Calu3 (cell line): ENCODE measurements at regions of chr1 and their contacts with region 1.

Region 1: DNA sequence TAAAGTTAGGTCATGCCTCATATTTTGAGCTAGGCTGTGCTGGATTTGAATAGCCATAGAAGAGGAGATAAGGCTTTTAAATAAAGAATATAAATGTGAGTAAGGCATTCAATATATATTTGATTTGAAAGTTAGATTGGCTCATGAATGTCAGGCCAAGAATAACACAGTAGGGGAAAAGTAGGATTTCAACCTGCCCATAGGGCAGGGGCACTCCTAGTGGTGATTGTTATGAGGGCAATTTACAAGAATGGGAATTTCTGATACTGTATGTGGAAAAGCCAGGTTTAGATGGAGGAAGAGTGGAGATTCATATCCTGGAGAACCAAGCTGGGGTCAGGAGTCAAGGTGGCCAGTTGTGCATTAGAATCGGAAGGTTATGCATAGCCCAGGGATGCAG is 74.9 kb downstream of the DNAH14 start:
- DNase-seq: peak; percentile 13
- H3K4me3 Mint-ChIP-seq: no peak overlapping the region
- H3K27ac Mint-ChIP-seq: no peak overlapping the region
- H3K4me1 Mint-ChIP-seq: peaks cover 15% of the 10 kb centered on the region
- H3K27me3 Mint-ChIP-seq: no peaks in the 10 kb centered on the region
- CTCF ChIP-seq: peak; percentile 56

Region 2: GRCh38 chr1:224650290-224650689 is 354.1 kb before region 1 on chr1:
- CTCF ChIA-PET with region 1: interaction called, 4 read pairs
- intact Hi-C with region 1: loop called (anchors 10 kb)
- DNase-seq: no peak
- H3K4me3 Mint-ChIP-seq: no peak overlapping the region
- H3K27ac Mint-ChIP-seq: no peak overlapping the region
- H3K4me1 Mint-ChIP-seq: peaks cover 22% of the 10 kb centered on the region
- H3K27me3 Mint-ChIP-seq: no peaks in the 10 kb centered on the region
- CTCF ChIP-seq: no peak

Region 3: DNA sequence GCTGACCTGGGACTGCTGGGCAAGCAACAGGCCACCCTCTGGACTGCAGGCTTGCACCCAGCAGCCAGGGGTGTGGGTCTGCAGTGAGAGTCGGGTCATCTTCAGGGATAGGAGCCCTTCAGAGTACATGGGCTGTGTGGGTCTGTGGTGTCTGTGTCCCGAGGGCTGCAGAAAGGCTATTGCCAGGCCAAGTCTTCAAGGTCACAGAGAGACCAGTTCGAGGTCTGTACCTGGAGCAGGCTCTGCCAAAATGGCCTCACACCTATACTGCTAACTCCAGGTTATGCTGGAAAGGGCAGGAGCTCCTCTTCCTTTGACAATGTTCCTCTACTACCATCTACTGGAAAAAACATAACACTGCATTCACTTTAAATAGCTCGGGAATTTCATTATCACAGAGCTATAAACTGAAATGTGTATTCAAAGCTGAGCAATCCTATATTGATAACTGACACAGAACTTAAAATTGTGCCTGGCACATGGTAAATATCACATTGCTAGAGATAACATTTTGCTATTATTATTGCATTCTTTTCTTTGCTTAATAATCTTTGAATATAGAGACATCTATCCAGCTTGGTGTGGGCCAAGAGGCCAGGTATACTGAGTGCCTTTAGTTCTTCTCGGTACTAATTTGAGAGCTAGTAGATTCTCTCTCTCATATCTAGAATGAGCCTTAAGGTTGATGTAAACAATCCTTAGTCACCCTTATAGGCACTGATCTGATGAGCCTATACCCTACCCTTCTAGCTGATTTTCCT is 81.8 kb before region 1 on chr1:
- CTCF ChIA-PET with region 1: no interaction called
- intact Hi-C with region 1: no loop called
- DNase-seq: peak; percentile 30
- H3K4me3 Mint-ChIP-seq: no peak overlapping the region
- H3K27ac Mint-ChIP-seq: no peak overlapping the region
- H3K4me1 Mint-ChIP-seq: peaks cover 11% of the 10 kb centered on the region
- H3K27me3 Mint-ChIP-seq: no peaks in the 10 kb centered on the region
- CTCF ChIP-seq: peak; percentile 15

Region 4: DNA sequence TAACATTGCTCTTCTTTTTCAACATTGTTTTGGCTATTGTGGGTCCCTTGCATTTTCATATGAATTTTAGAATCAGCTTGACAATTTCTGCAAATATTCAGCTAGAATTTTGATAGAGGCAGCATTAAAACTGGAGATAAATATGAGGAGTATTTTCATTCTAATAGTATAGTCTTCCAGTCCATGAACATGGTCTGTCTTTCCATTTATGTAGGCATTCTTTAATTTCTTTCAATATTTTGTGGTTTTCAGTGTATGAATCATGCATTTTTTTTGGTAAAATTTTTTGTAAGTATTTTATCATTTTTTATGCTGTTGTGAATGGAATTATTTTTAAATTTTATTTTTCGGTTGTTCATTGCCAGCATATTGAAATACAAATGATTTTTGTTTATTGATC is 22.3 kb after region 1 on chr1:
- CTCF ChIA-PET with region 1: interaction called, 12 read pairs
- intact Hi-C with region 1: no loop called
- DNase-seq: no peak
- H3K4me3 Mint-ChIP-seq: no peak overlapping the region
- H3K27ac Mint-ChIP-seq: no peak overlapping the region
- H3K4me1 Mint-ChIP-seq: no peaks in the 10 kb centered on the region
- H3K27me3 Mint-ChIP-seq: no peaks in the 10 kb centered on the region
- CTCF ChIP-seq: no peak

Region 5: DNA sequence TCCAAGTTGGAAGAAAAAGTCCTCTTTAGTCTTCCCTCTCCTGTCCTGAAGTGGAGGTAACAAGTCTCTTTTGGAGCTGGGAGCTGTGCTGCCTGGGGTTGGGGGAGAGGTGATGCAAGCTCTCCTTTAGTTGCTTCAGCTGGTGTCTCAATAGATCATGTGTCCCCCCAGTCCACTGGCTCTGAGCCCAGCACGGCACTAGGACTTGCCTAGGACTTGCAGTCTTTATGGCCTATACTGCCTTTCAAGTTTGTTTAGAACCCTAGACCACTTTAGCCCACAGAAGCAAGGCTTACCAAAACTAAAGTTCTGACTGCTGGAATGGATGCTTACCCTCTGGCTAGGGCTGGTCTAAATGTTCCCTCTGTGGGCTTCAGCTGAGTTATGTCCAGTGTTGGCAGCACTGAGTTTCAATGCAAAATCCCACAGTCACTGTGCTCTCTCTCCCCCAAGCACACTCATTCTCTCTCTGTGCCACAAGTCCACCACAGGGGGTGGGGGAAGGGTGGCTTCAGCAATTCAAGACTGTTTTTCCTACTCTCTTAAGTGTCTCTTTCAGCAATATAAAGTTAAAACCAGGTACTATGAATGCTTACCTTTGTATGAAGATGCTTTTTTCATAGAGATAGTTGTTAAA is 110.1 kb after region 1 on chr1:
- CTCF ChIA-PET with region 1: no interaction called
- intact Hi-C with region 1: no loop called
- DNase-seq: no peak
- H3K4me3 Mint-ChIP-seq: no peak overlapping the region
- H3K27ac Mint-ChIP-seq: no peak overlapping the region
- H3K4me1 Mint-ChIP-seq: no peaks in the 10 kb centered on the region
- H3K27me3 Mint-ChIP-seq: no peaks in the 10 kb centered on the region
- CTCF ChIP-seq: no peak